ENCODE measurements at regions of chr10 and their contacts with region 1.

Region 1: DNA sequence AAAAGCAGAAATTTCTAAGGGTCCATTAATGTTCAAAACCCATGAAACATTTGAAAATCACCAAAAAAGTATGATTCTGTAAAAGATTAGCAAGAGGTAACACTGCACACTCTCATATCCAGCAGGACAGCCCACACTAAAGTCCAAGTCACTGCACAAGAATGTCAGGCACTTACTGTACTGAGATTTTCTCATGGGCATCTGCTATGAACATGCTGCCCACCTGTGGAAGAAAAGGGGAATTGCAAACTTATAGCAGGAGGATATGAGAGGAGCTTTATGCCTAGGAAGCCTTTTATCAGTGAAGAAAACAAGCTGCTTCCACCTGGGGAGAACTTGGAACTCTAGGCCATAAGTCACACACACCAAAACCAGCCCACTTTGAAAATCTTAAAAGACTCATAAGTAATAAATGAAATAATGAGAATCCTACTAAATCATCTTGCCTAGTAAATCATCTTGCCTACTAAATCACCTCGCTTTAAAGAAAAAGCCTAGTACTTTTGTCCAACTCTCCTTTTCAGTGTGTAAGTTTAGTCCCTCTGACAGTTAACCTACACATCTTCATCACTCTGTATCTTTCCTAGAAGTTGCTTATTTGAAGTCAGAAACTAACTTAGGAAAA is 46.1 kb downstream of the ARMH3 start:
- DNase-seq: peak; percentile 89

Region 2: GRCh38 chr10:101341438-101341837 is 668.5 kb before region 1 on chr10:
- in situ Hi-C with region 1: no loop called
- DNase-seq: no peak

Region 3: GRCh38 chr10:101889256-101890210 is 120.4 kb before region 1 on chr10:
- in situ Hi-C with region 1: loop called (anchors 25 kb)
- DNase-seq: peak; percentile 82

Region 4: DNA sequence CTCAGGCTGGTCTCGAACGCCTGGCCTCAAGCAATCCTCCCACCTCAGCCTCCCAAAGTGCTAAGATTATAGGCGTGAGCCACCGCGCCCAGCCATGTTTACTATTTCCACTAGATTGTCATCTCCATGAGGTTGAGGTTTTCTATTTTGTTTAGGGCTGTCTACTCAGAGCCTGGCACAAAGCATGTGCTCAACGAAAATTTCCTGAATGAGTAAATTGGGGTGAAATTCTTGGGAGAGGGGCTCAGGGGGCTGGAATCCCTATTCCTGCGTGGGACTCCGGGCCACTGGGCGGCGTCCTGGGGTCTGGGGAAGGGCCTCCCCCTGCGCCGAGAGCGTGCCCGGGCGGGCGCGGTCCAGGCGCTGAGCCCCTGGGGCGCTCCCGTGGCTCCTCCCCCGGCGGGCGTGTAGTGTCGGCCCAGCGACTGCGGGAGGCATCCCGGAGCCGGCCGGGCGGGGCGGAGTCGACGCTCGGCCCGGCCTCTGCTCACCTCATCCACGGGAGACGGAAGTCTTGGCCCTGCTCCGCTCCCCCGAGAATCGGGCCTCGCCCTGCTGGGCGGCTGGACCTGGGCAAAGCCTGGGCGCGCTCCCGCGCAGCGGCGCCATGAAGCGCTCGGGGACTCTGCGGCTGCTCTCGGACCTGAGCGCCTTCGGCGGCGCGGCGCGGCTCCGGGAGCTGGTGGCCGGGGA is 55.1 kb after region 1 on chr10 and contains the start of gene HPS6:
- in situ Hi-C with region 1: no loop called
- DNase-seq: peak; percentile 83
- total RNA-seq, gene HPS6: 55.3 and 71.9 TPM in 2 replicates

Measured in G401 (cell line).